PC-9 (cell line): ENCODE measurements at regions of chr10 and their contacts with region 1.

Region 1: GRCh38 chr10:47361293-47361692 is 13.1 kb downstream of the RBP3 start:
- DNase-seq: peak in 1 of 2 experiments; percentile 42
- H3K4me3 ChIP-seq: no peak overlapping the region
- H3K27ac ChIP-seq: peak overlapping the region; percentile 40; the same call in 1 of the 2 replicates
- H3K4me1 ChIP-seq: peaks cover 43% of the 10 kb centered on the region
- H3K27me3 ChIP-seq: no peaks in the 10 kb centered on the region
- CTCF ChIP-seq: peak; percentile 86

Region 2: GRCh38 chr10:46001187-46001756 is 1360.0 kb before region 1 on chr10:
- CTCF ChIA-PET with region 1: no interaction called
- POLR2A ChIA-PET with region 1: interaction called, 15 read pairs
- intact Hi-C with region 1: no loop called
- DNase-seq: no peak
- H3K4me3 ChIP-seq: no peak overlapping the region
- H3K27ac ChIP-seq: no peak overlapping the region
- H3K4me1 ChIP-seq: no peaks in the 10 kb centered on the region
- H3K27me3 ChIP-seq: no peaks in the 10 kb centered on the region
- CTCF ChIP-seq: no peak

Region 3: DNA sequence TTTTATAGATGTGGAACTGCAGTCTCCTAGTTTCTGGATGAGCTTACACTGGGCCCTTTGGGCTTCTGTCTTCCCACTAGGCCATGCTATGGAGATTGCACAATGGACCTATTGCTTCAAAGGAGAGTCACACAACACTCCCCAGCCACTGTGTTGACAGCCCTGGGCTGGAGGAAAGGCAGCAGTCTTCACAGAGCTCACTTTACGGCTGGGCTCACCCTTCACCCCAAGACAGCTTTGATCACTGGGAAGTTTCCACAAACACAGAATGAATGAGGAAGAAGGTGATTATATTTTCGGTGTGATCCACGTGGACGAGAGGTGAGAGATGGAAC is 154.0 kb before region 1 on chr10:
- CTCF ChIA-PET with region 1: no interaction called
- POLR2A ChIA-PET with region 1: no interaction called
- intact Hi-C with region 1: no loop called
- DNase-seq: no peak
- H3K4me3 ChIP-seq: no peak overlapping the region
- H3K27ac ChIP-seq: no peak overlapping the region
- H3K4me1 ChIP-seq: no peaks in the 10 kb centered on the region
- H3K27me3 ChIP-seq: no peaks in the 10 kb centered on the region
- CTCF ChIP-seq: no peak

Region 4: GRCh38 chr10:47269294-47269693 is 92.0 kb before region 1 on chr10:
- CTCF ChIA-PET with region 1: no interaction called
- POLR2A ChIA-PET with region 1: no interaction called
- intact Hi-C with region 1: no loop called
- DNase-seq: no peak
- H3K4me3 ChIP-seq: no peak overlapping the region
- H3K27ac ChIP-seq: no peak overlapping the region
- H3K4me1 ChIP-seq: no peaks in the 10 kb centered on the region
- H3K27me3 ChIP-seq: peaks cover 22% of the 10 kb centered on the region
- CTCF ChIP-seq: no peak

Region 5: DNA sequence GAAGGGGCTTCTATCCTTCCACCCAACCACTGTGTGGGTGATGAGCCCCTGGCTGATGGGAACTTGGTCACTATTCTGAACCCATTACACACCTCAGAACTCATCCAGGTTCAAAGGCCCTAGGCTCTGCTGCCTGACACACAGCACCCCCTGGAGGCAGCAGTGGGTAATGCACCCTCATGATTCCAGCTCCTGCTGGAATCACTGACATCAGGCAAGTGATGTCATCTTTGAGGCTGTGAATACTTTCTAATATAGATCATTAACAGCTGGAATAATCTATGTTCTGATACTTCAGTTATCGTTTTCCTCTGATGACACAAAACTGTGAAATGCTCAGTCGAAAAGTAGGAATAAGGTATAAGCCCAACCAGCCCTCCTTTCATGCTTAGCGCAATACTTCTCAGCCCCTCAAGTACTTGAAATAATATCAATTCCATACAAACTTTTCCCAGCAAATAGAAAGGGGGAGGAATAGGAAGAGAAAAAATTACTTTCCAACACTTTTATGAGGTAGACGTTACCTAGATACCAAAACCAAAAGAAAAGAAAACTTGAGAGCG is 20.6 kb before region 1 on chr10:
- CTCF ChIA-PET with region 1: no interaction called
- POLR2A ChIA-PET with region 1: no interaction called
- intact Hi-C with region 1: no loop called
- DNase-seq: peak; percentile 50 to 68
- H3K4me3 ChIP-seq: no peak overlapping the region
- H3K27ac ChIP-seq: no peak overlapping the region
- H3K4me1 ChIP-seq: no peaks in the 10 kb centered on the region
- H3K27me3 ChIP-seq: no peaks in the 10 kb centered on the region
- CTCF ChIP-seq: peak; percentile 99

Region 6: DNA sequence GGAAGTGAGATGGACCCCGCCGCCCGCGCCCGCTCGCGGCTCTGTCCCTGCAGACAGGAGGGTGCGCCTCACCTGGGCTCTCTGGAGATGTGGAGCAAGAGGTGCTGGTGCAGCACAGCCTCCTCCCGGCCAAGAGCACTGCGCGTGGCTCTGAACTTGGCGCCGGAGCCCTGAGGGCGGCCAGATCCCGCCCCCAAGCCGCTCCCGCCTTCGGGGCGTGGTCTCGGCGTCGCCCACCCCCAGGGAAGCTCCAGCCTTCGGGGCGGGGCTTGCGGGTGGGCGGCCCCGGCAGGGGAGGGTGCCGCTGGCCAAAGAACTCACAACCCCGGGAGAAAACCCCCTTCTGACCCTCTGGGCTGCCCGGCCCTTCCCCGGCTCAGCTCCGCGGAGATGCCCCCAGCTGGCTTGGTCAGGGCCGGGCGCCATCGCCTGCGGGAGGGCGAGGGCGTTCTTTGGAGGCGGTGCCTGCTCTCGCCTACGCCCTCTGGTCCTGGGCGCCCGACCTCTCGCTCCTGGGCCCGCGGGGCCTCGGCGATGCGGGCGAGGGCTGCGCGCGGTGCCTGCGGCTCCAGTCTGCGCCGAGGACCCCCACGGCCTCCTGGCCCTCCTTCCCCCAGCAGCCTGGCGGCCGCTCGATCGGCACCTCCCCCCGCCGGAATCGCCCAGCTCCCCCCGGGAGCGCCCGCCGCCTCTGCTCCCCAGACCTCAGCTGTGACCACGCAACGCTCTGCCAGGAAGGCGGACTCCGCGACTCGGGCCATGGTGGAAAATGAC is 23.0 kb after region 1 on chr10 and contains the start of gene ZNF488:
- CTCF ChIA-PET with region 1: interaction called, 3 read pairs
- POLR2A ChIA-PET with region 1: interaction called, 11 read pairs
- intact Hi-C with region 1: loop called (anchors 2 kb)
- DNase-seq: peak; percentile 83 to 97
- H3K4me3 ChIP-seq: peak within 1 kb of the TSS; percentile 81
- H3K27ac ChIP-seq: peak within 1 kb of the TSS; percentile 54
- H3K4me1 ChIP-seq: peaks cover 21% of the 10 kb centered on the region
- H3K27me3 ChIP-seq: no peaks in the 10 kb centered on the region
- CTCF ChIP-seq: no peak; the same call in 1 of the 2 replicates
- total RNA-seq, gene ZNF488: 11.4 and 18.1 TPM in 2 replicates

Region 7: GRCh38 chr10:47402641-47403301 is 41.5 kb after region 1 on chr10:
- CTCF ChIA-PET with region 1: interaction called, 10 read pairs
- POLR2A ChIA-PET with region 1: no interaction called
- intact Hi-C with region 1: loop called (anchors 1 kb)
- DNase-seq: peak; percentile 85 to 88
- H3K4me3 ChIP-seq: no peak overlapping the region; the same call in 1 of the 2 replicates
- H3K27ac ChIP-seq: peak overlapping the region; percentile 76
- H3K4me1 ChIP-seq: peaks cover 60% of the 10 kb centered on the region
- H3K27me3 ChIP-seq: no peaks in the 10 kb centered on the region
- CTCF ChIP-seq: no peak

Region 8: DNA sequence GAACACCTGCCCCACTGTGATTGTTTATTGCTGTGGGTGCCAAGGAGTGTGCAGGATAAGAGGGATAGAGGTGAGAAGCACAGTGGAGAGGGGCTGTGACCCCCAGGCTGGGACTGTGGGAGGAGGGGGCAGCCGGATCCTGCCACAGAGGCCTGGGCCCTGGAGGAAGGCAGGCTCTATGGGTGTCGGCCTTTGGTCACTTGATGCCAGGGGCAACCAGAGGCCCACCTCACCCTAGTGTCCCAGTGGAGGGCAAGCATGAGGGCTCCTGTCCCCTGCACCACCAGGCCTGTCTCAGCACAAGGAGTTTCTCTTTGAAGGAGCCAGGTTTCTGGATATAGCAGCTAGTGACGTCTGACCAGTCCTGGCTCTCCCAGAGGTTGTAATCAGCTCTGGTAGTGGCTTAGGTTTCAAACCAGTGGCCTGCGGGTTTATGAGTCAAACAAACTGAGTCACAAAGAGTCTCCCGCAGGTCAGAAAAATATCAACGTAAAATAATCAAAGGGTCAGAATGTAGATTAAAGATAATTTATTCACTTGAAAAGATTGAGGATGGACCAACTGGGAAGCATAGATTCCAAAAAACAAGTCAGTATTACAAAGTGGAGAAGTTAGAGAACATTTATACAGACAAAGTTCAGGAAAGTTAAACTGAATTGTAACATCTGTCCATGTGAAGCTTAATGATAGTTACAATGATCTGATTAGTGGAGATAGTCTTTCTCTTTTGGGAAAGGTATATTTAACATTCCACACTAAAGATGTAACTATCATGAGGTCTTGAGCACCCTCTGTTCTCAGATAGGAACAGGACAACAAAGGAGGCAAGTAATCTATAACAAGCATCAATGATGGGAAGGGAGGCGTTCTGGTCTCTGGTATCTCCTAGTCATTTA is 60.0 kb after region 1 on chr10:
- CTCF ChIA-PET with region 1: no interaction called
- POLR2A ChIA-PET with region 1: no interaction called
- intact Hi-C with region 1: loop called (anchors 5 kb)
- DNase-seq: peak; percentile 77 to 95
- H3K4me3 ChIP-seq: no peak overlapping the region
- H3K27ac ChIP-seq: peak overlapping the region; percentile 81
- H3K4me1 ChIP-seq: peaks cover 37% of the 10 kb centered on the region
- H3K27me3 ChIP-seq: no peaks in the 10 kb centered on the region
- CTCF ChIP-seq: no peak